ENCODE measurements at regions of chr12 and their contacts with region 1.

Region 1: GRCh38 chr12:2341871-2342270 is 289.1 kb downstream of the CACNA1C start:
- DNase-seq: peak; percentile 85 to 95 (median 91)
- H3K4me3 ChIP-seq: peak overlapping the region in 1 of 3 experiments; percentile 11
- H3K4me3 Mint-ChIP-seq: peak overlapping the region in 1 of 2 donors; percentile 36
- H3K27ac ChIP-seq: peak overlapping the region; percentile 66 to 90
- H3K27ac Mint-ChIP-seq: peak overlapping the region; percentile 92 to 98 (median 95)
- H3K4me1 ChIP-seq: peaks cover 87 to 94% of the 10 kb centered on the region in 2 donors
- H3K4me1 Mint-ChIP-seq: peaks cover 88% of the 10 kb centered on the region
- H3K27me3 ChIP-seq: no peaks in the 10 kb centered on the region
- H3K27me3 Mint-ChIP-seq: peaks cover 0 to 2% (median 0%) of the 10 kb centered on the region in 3 donors
- CTCF ChIP-seq: no peak

Region 2: DNA sequence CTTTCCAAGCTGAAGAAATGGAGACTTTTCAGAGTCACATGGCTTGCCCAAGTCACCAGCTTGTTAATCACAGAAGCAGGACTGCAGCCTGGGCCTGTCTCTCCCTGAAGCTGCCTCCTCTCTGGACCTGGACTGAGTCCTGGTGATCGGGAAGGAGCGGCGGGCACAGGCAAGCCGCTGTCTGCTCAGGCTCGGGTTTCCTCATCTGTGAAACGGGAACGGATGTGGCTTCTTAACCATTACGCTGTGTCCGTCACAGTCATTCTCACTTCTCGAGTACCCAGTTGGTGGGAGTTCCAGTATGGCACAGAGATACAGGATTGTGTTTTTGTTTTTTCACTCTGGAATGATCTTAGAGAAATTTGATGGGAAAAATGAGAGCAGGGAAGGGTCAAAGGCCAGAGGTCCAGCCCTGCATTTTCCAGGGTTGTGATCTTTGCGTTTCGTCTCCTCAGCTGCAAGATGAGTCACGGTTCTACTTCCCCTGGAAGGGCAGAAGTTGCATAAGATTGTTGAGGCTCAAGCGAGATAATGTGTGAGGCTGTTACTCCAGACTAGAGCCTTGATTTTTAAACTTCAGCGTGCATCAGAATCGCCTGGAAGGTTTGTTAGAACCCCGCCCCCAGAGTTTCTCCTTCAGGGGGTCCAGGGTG is 529.1 kb before region 1 on chr12:
- intact Hi-C with region 1: loop called in 1 of 2 experiments (anchors 10 kb)
- DNase-seq: peak; percentile 87 to 94 (median 91)
- H3K4me3 ChIP-seq: peak overlapping the region in 1 of 3 experiments; percentile 69
- H3K4me3 Mint-ChIP-seq: peak overlapping the region; percentile 47 to 84
- H3K27ac ChIP-seq: peak overlapping the region; percentile 94 to 98
- H3K27ac Mint-ChIP-seq: peak overlapping the region; percentile 98 to 100 (median 100)
- H3K4me1 ChIP-seq: peaks cover 76 to 86% of the 10 kb centered on the region in 2 donors
- H3K4me1 Mint-ChIP-seq: peaks cover 81% of the 10 kb centered on the region
- H3K27me3 ChIP-seq: no peaks in the 10 kb centered on the region
- H3K27me3 Mint-ChIP-seq: peaks cover 2 to 3% (median 3%) of the 10 kb centered on the region in 3 donors
- CTCF ChIP-seq: no peak